ENCODE measurements at regions of chr16 and their contacts with region 1.

Region 1: GRCh38 chr16:87387942-87388817 is 4.0 kb upstream of the MAP1LC3B start:
- DNase-seq: peak; percentile 94
- H3K4me3 Mint-ChIP-seq: peak overlapping the region; percentile 57
- H3K27ac Mint-ChIP-seq: peak overlapping the region; percentile 96
- H3K4me1 Mint-ChIP-seq: peaks cover 52% of the 10 kb centered on the region
- H3K27me3 Mint-ChIP-seq: peaks cover 2% of the 10 kb centered on the region

Region 2: GRCh38 chr16:85554112-85554813 is 1833.9 kb before region 1 on chr16:
- CTCF ChIA-PET with region 1: no interaction called
- POLR2A ChIA-PET with region 1: no interaction called
- intact Hi-C with region 1: loop called (anchors 10 kb)
- DNase-seq: peak; percentile 92
- H3K4me3 Mint-ChIP-seq: peak overlapping the region; percentile 82
- H3K27ac Mint-ChIP-seq: peak overlapping the region; percentile 91
- H3K4me1 Mint-ChIP-seq: peaks cover 35% of the 10 kb centered on the region
- H3K27me3 Mint-ChIP-seq: no peaks in the 10 kb centered on the region

Region 3: DNA sequence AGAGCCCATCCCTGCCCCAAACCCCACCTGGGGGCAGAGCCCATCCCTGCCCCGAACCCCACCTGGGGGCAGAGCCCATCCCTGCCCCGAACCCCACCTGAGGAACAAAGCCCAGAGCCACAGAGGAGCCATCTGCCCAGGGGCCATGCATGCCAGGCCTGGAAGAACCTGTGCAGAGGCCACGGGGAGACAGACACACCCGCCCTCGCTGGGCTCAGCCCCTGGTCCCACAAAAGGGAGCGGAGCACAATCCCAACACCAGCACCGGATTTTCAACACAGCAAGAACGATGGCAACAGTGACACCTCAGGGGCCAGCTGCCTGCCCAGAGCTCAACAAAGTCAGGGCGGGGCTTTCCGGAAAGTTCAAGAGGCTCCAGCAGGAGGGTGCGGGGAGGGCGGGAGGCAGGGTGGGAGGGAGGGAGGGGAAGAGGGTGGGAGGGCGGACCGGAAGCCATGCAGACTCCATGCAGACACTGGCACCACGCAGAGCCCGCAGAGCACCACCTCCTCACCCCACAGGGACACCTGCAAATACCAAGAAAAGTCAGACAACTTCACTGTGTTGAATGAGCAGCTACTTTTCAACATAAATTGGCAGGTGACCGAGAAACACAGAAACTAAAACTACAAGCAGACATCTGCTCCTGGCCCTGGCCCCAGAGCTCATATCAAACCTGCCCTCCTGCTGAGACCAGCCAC is 43.1 kb before region 1 on chr16:
- CTCF ChIA-PET with region 1: no interaction called
- POLR2A ChIA-PET with region 1: no interaction called
- intact Hi-C with region 1: loop called (anchors 5 kb)
- DNase-seq: peak; percentile 74
- H3K4me3 Mint-ChIP-seq: peak overlapping the region; percentile 27
- H3K27ac Mint-ChIP-seq: peak overlapping the region; percentile 86
- H3K4me1 Mint-ChIP-seq: peaks cover 11% of the 10 kb centered on the region
- H3K27me3 Mint-ChIP-seq: no peaks in the 10 kb centered on the region

Region 4: GRCh38 chr16:87457709-87458423 is 69.7 kb after region 1 on chr16:
- CTCF ChIA-PET with region 1: interaction called, 4 read pairs
- POLR2A ChIA-PET with region 1: no interaction called
- intact Hi-C with region 1: loop called (anchors 5 kb)
- DNase-seq: peak; percentile 82
- H3K4me3 Mint-ChIP-seq: no peak overlapping the region
- H3K27ac Mint-ChIP-seq: peak overlapping the region; percentile 65
- H3K4me1 Mint-ChIP-seq: peaks cover 32% of the 10 kb centered on the region
- H3K27me3 Mint-ChIP-seq: no peaks in the 10 kb centered on the region

Region 5: GRCh38 chr16:87499189-87499486 is 111.0 kb after region 1 on chr16:
- CTCF ChIA-PET with region 1: no interaction called
- POLR2A ChIA-PET with region 1: no interaction called
- intact Hi-C with region 1: no loop called
- DNase-seq: no peak
- H3K4me3 Mint-ChIP-seq: no peak overlapping the region
- H3K27ac Mint-ChIP-seq: no peak overlapping the region
- H3K4me1 Mint-ChIP-seq: peaks cover 15% of the 10 kb centered on the region
- H3K27me3 Mint-ChIP-seq: peaks cover 2% of the 10 kb centered on the region

Region 6: GRCh38 chr16:87765776-87766484 is 377.8 kb after region 1 on chr16 and contains the start of gene KLHDC4:
- CTCF ChIA-PET with region 1: no interaction called
- POLR2A ChIA-PET with region 1: no interaction called
- intact Hi-C with region 1: loop called (anchors 5 kb)
- DNase-seq: peak; percentile 94
- H3K4me3 Mint-ChIP-seq: peak within 1 kb of the TSS; percentile 97
- H3K27ac Mint-ChIP-seq: peak within 1 kb of the TSS; percentile 92
- H3K4me1 Mint-ChIP-seq: peaks cover 38% of the 10 kb centered on the region
- H3K27me3 Mint-ChIP-seq: no peaks in the 10 kb centered on the region
- total RNA-seq, gene KLHDC4: 65.9 to 70.2 TPM

Region 7: DNA sequence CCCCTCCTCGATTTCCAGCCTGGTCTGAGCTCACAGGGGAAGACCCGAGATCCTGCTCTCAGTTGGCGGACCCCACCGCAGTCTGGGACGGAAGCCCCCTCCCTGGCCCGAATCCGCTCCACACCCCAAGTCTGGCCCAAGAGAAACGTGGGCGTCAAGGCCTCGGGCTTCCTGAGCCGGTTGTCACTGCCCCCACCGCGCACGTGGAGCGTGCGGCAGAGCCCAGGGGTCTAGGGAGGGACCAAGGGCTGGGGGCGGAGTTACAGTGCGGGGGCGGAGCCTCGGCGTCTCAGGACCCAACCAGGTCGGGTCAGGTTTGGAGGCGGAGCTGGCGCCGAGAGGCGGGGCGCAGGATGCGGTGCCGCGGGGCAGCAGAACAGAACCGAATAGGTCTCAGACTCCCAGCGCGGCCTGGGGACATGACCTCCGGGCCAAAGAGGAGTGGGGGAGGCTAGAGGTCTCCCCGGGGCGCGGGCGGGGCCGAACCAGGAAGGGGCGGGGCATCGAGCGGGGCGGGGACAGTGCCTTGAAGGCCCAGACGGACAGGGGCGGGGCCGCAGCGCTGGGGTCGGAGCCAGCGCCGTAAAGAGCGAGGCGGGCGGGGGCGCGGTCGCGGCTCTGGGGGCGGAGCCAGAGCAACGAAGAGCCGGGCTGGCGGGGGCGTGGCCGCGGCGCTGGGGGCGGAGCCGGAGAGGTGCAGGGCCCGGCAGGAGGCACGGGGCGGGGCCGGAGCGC is 1064.5 kb after region 1 on chr16:
- CTCF ChIA-PET with region 1: no interaction called
- POLR2A ChIA-PET with region 1: no interaction called
- intact Hi-C with region 1: loop called (anchors 5 kb)
- DNase-seq: peak; percentile 99
- H3K4me3 Mint-ChIP-seq: peak overlapping the region; percentile 80
- H3K27ac Mint-ChIP-seq: peak overlapping the region; percentile 84
- H3K4me1 Mint-ChIP-seq: peaks cover 25% of the 10 kb centered on the region
- H3K27me3 Mint-ChIP-seq: no peaks in the 10 kb centered on the region